Naive thymus-derived CD4-positive, alpha-beta T cell (primary cell): ENCODE measurements at regions of chr9 and their contacts with region 1.

Region 1: GRCh38 chr9:20941174-20941690 is 90.2 kb downstream of the HACD4 start:
- DNase-seq: peak; percentile 13 to 73 (median 62)
- ATAC-seq: peak; percentile 95
- H3K4me3 ChIP-seq: no peak overlapping the region
- H3K4me3 Mint-ChIP-seq: peak overlapping the region in 1 of 10 donors; percentile 20
- H3K27ac ChIP-seq: no peak overlapping the region
- H3K27ac Mint-ChIP-seq: peak overlapping the region in 3 of 9 donors; percentile 13 to 29 (median 29)
- H3K4me1 ChIP-seq: no peaks in the 10 kb centered on the region
- H3K4me1 Mint-ChIP-seq: peaks cover 0 to 8% (median 5%) of the 10 kb centered on the region in 7 donors
- H3K27me3 ChIP-seq: no peaks in the 10 kb centered on the region
- H3K27me3 Mint-ChIP-seq: no peaks in the 10 kb centered on the region

Region 2: DNA sequence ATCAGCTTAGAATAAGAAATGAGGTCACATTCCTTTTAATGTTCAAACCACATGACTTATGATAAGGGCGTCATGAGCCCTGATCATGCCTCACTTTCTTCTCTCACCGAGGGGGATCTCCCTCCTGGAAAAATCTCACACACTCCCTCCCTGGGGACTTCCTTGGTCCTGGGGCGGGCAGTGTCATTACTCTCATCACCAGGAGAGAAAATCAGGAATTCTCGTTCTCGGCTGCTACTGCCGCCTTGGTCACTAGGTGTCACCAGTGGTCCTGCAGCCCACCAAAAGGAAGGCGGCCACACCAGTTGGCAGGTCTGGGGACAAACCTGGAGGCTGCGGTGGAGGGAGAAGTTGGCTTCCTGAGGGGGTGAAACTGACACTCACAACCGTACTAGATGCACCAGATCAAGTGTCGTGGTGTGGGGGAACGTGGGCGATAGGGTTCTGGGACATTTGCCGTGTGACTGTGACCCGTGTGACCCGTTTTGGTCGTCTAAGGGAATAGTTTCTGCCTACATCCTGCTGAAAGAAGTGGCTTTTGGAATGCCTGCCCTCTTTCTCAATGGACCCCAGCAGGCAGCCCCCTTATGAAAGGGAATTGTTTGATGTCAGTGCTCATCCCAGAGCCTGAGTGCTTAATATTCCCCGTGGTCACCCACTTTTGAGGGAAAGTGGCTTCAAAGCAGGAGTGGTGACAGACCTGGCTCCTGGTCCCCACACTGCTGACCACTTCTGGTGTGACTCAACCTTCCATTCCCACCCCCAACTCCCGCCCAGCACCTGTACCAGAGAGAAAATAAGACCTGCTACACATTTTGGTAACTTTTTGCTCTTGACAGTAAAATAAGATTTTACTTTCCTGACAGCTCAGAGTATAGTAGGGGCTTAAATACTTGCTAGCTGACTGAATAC is 1469.2 kb before region 1 on chr9:
- CTCF ChIA-PET with region 1: no interaction called
- POLR2A ChIA-PET with region 1: no interaction called
- intact Hi-C with region 1: loop called in 1 of 2 experiments (anchors 5 kb)
- DNase-seq: peak in 7 of 9 donors; percentile 11 to 56 (median 33)
- ATAC-seq: peak; percentile 60
- H3K4me3 ChIP-seq: peak overlapping the region; percentile 39
- H3K4me3 Mint-ChIP-seq: peak overlapping the region; percentile 48 to 85 (median 75)
- H3K27ac ChIP-seq: no peak overlapping the region
- H3K27ac Mint-ChIP-seq: peak overlapping the region in 2 of 9 donors; percentile 36 to 65
- H3K4me1 ChIP-seq: no peaks in the 10 kb centered on the region
- H3K4me1 Mint-ChIP-seq: peaks cover 0 to 13% (median 4%) of the 10 kb centered on the region in 7 donors
- H3K27me3 ChIP-seq: no peaks in the 10 kb centered on the region
- H3K27me3 Mint-ChIP-seq: peaks cover 0 to 15% (median 0%) of the 10 kb centered on the region in 5 donors

Region 3: GRCh38 chr9:19946441-19947109 is 994.7 kb before region 1 on chr9:
- CTCF ChIA-PET with region 1: interaction called, 8 read pairs
- POLR2A ChIA-PET with region 1: no interaction called
- intact Hi-C with region 1: loop called in 1 of 2 experiments (anchors 1 kb)
- DNase-seq: peak in 3 of 9 donors; percentile 5 to 35 (median 22)
- ATAC-seq: peak; percentile 57
- H3K4me3 ChIP-seq: no peak overlapping the region
- H3K4me3 Mint-ChIP-seq: no peak overlapping the region
- H3K27ac ChIP-seq: no peak overlapping the region
- H3K27ac Mint-ChIP-seq: peak overlapping the region in 4 of 9 donors; percentile 10 to 64 (median 34)
- H3K4me1 ChIP-seq: no peaks in the 10 kb centered on the region
- H3K4me1 Mint-ChIP-seq: peaks cover 2 to 24% (median 11%) of the 10 kb centered on the region in 7 donors
- H3K27me3 ChIP-seq: no peaks in the 10 kb centered on the region
- H3K27me3 Mint-ChIP-seq: peaks cover 0 to 14% (median 7%) of the 10 kb centered on the region in 5 donors

Region 4: GRCh38 chr9:20197976-20198685 is 743.1 kb before region 1 on chr9:
- CTCF ChIA-PET with region 1: no interaction called
- POLR2A ChIA-PET with region 1: interaction called, 3 read pairs
- intact Hi-C with region 1: loop called in 1 of 2 experiments (anchors 2 kb)
- DNase-seq: peak in 3 of 9 donors; percentile 3 to 27 (median 5)
- ATAC-seq: no peak
- H3K4me3 ChIP-seq: no peak overlapping the region
- H3K4me3 Mint-ChIP-seq: peak overlapping the region in 3 of 10 donors; percentile 6 to 59 (median 51)
- H3K27ac ChIP-seq: no peak overlapping the region
- H3K27ac Mint-ChIP-seq: peak overlapping the region in 4 of 9 donors; percentile 17 to 54 (median 26)
- H3K4me1 ChIP-seq: peaks cover 0 to 17% of the 10 kb centered on the region in 2 donors
- H3K4me1 Mint-ChIP-seq: peaks cover 10 to 39% (median 32%) of the 10 kb centered on the region in 7 donors
- H3K27me3 ChIP-seq: no peaks in the 10 kb centered on the region
- H3K27me3 Mint-ChIP-seq: no peaks in the 10 kb centered on the region

Region 5: DNA sequence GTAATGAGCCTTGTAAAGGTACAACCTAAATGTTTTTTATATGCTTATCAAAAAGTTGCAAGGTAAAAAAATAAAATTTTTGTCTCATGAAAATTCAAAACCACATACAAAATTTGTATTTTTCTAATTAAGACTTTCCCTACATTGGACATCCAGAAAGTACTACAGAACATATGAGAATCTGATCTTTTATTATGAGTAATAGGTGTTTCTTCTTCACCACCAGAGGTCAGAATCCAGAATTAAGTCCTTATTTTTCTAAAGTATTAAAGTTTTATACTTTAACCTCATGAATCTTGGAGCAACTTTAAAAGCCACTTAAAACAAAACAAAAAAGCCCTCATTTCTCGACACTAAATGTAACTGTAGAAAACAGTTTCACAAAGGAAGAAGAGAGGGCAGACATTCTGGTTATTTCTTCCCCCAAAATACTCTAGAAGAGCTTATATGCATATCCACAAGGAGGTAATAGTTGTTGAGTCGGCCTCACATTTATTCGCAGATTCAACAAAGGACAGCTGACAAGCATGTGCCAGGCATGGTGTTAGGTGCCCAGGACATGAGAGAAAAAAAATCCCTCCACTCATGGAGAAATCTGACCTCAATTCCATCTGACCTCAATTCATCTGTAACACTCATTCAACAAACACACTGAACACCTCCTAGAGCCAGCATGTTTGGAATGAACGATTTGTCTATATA is 388.2 kb before region 1 on chr9:
- CTCF ChIA-PET with region 1: no interaction called
- POLR2A ChIA-PET with region 1: no interaction called
- intact Hi-C with region 1: loop called (anchors 2 to 5 kb)
- DNase-seq: peak in 1 of 9 donors; percentile 28
- ATAC-seq: no peak
- H3K4me3 ChIP-seq: no peak overlapping the region
- H3K4me3 Mint-ChIP-seq: peak overlapping the region; percentile 27 to 84 (median 46)
- H3K27ac ChIP-seq: no peak overlapping the region
- H3K27ac Mint-ChIP-seq: peak overlapping the region; percentile 2 to 79 (median 54)
- H3K4me1 ChIP-seq: peaks cover 23 to 33% of the 10 kb centered on the region in 2 donors
- H3K4me1 Mint-ChIP-seq: peaks cover 58 to 86% (median 79%) of the 10 kb centered on the region in 7 donors
- H3K27me3 ChIP-seq: no peaks in the 10 kb centered on the region
- H3K27me3 Mint-ChIP-seq: no peaks in the 10 kb centered on the region

Region 6: DNA sequence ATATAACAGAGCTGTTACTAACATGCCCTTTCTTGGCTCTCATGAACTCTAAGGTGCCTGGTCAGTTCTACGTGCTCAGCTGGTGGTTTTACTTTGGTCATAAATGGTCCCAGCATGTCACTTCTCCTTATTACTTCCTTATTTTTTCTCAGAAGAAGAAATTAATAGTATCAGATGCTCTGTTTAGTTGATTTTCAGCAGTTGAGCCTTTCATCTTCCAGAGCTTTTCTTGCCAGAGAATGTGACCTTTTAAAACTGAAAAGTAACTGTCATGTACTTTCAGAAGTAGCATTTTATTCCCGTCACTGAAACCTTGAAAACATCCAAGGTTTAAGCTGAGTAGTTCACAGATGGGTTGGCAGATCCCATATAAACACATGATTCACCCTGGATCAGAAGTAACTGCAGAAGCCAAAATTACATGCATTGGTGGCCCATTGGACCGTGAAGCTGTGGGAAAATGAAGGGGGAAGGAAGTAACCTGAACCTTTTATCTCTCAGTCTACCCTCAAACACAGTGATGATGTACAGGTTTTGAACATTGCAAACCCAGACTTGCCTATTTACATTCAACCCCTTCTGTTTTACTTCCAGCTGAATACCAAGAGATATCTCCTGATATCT is 39.7 kb after region 1 on chr9:
- CTCF ChIA-PET with region 1: no interaction called
- POLR2A ChIA-PET with region 1: no interaction called
- intact Hi-C with region 1: no loop called
- DNase-seq: no peak
- ATAC-seq: peak; percentile 70
- H3K4me3 ChIP-seq: no peak overlapping the region
- H3K4me3 Mint-ChIP-seq: no peak overlapping the region
- H3K27ac ChIP-seq: no peak overlapping the region
- H3K27ac Mint-ChIP-seq: peak overlapping the region in 1 of 9 donors; percentile 0
- H3K4me1 ChIP-seq: no peaks in the 10 kb centered on the region
- H3K4me1 Mint-ChIP-seq: peaks cover 0 to 11% (median 4%) of the 10 kb centered on the region in 7 donors
- H3K27me3 ChIP-seq: no peaks in the 10 kb centered on the region
- H3K27me3 Mint-ChIP-seq: no peaks in the 10 kb centered on the region